Activated naive CD4-positive, alpha-beta T cell treated with anti-CD3 and anti-CD28 coated beads for 36 hours (primary cell): ENCODE measurements at regions of chr13 and their contacts with region 1.

Region 1: GRCh38 chr13:36420437-36420891 is 11.8 kb upstream of the CCNA1 start:
- DNase-seq: peak; percentile 85
- H3K4me3 Mint-ChIP-seq: no peak overlapping the region
- H3K27ac Mint-ChIP-seq: peak overlapping the region; percentile 8
- H3K4me1 Mint-ChIP-seq: peaks cover 13% of the 10 kb centered on the region
- H3K27me3 Mint-ChIP-seq: peaks cover 60% of the 10 kb centered on the region

Region 2: DNA sequence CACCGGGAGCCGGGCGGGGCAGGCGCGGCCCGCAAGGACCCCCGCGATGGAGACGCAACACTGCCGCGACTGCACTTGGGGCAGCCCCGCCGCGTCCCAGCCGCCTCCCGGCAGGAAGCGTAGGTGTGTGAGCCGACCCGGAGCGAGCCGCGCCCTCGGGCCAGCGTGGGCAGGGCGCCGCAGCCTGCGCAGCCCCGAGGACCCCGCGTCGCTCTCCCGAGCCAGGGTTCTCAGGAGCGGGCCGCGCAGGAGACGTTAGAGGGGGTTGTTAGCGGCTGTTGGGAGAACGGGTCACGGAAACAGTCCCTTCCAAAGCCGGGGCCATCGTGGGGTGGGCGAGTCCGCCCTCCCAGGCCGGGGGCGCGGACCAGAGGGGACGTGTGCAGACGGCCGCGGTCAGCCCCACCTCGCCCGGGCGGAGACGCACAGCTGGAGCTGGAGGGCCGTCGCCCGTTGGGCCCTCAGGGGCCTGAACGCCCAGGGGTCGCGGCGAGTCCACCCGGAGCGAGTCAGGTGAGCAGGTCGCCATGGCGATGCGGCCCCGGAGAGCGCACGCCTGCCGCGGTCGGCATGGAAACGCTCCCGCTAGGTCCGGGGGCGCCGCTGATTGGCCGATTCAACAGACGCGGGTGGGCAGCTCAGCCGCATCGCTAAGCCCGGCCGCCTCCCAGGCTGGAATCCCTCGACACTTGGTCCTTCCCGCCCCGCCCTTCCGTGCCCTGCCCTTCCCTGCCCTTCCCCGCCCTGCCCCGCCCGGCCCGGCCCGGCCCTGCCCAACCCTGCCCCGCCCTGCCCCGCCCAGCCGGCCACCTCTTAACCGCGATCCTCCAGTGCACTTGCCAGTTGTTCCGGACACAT is 11.4 kb after region 1 on chr13 and contains the start of gene CCNA1:
- CTCF ChIA-PET with region 1: interaction called, 7 read pairs
- intact Hi-C with region 1: loop called (anchors 1 kb)
- DNase-seq: peak; percentile 28
- H3K4me3 Mint-ChIP-seq: peak within 1 kb of the TSS; percentile 46
- H3K27ac Mint-ChIP-seq: no peak within 1 kb of the TSS
- H3K4me1 Mint-ChIP-seq: peaks cover 15% of the 10 kb centered on the region
- H3K27me3 Mint-ChIP-seq: peaks cover 63% of the 10 kb centered on the region
- total RNA-seq, gene CCNA1: 0.17 to 0.59 TPM

Region 3: GRCh38 chr13:36736119-36736726 is 315.8 kb after region 1 on chr13:
- CTCF ChIA-PET with region 1: interaction called, 31 read pairs
- intact Hi-C with region 1: loop called (anchors 1 kb)
- DNase-seq: peak; percentile 50
- H3K4me3 Mint-ChIP-seq: no peak overlapping the region
- H3K27ac Mint-ChIP-seq: no peak overlapping the region
- H3K4me1 Mint-ChIP-seq: no peaks in the 10 kb centered on the region
- H3K27me3 Mint-ChIP-seq: peaks cover 4% of the 10 kb centered on the region

Region 4: GRCh38 chr13:36841391-36841790 is 420.9 kb after region 1 on chr13:
- CTCF ChIA-PET with region 1: interaction called, 3 read pairs
- intact Hi-C with region 1: loop called (anchors 1 kb)
- DNase-seq: no peak
- H3K4me3 Mint-ChIP-seq: no peak overlapping the region
- H3K27ac Mint-ChIP-seq: no peak overlapping the region
- H3K4me1 Mint-ChIP-seq: no peaks in the 10 kb centered on the region
- H3K27me3 Mint-ChIP-seq: no peaks in the 10 kb centered on the region

Region 5: DNA sequence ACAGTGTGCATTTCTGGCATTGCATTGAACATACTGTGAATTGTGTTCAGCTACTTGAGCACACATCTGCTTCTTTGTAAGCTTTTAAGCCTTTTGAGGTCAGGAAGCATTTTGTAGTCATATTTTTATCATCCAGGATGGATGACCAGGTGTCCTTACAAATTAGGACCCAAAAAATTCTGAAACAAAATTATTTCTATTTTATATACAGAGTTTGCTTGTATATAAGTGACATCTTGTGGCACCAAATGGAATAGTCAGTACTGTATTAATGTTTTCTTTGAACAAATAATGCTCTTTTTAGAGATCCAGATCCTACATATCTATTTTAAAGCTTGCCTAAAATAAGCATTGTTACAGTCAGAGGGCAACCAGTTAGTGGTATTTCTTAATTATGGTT is 648.5 kb after region 1 on chr13:
- CTCF ChIA-PET with region 1: no interaction called
- intact Hi-C with region 1: loop called (anchors 1 kb)
- DNase-seq: no peak
- H3K4me3 Mint-ChIP-seq: no peak overlapping the region
- H3K27ac Mint-ChIP-seq: no peak overlapping the region
- H3K4me1 Mint-ChIP-seq: no peaks in the 10 kb centered on the region
- H3K27me3 Mint-ChIP-seq: peaks cover 2% of the 10 kb centered on the region